ENCODE measurements at regions of chr10 and their contacts with region 1.

Region 1: GRCh38 chr10:96089670-96090462 is 40.2 kb upstream of the ZNF518A start:
- DNase-seq: peak; percentile 90
- H3K27ac ChIP-seq: peak overlapping the region; percentile 95
- CTCF ChIP-seq: no peak

Region 2: DNA sequence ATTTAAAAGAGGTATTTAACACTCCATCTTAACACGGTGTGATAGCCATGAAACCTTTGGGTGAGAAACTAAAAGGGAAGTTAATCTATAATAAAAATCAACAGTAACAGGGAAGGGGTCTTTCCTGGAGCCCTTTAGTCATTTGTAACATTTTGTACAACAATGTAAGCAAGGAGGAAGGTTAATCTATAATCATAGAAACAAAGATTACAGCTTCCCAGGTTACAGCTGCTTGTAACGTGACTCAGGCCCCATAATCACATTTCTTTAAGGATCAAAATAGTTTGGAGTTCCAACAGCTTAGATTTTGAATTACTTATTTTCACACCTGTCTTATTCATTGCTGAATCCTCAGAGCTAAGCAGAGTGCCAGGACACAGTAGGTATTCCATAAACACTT is 200.0 kb before region 1 on chr10:
- CTCF ChIA-PET with region 1: no interaction called
- POLR2A ChIA-PET with region 1: no interaction called
- DNase-seq: no peak
- H3K27ac ChIP-seq: no peak overlapping the region
- CTCF ChIP-seq: no peak

Region 3: DNA sequence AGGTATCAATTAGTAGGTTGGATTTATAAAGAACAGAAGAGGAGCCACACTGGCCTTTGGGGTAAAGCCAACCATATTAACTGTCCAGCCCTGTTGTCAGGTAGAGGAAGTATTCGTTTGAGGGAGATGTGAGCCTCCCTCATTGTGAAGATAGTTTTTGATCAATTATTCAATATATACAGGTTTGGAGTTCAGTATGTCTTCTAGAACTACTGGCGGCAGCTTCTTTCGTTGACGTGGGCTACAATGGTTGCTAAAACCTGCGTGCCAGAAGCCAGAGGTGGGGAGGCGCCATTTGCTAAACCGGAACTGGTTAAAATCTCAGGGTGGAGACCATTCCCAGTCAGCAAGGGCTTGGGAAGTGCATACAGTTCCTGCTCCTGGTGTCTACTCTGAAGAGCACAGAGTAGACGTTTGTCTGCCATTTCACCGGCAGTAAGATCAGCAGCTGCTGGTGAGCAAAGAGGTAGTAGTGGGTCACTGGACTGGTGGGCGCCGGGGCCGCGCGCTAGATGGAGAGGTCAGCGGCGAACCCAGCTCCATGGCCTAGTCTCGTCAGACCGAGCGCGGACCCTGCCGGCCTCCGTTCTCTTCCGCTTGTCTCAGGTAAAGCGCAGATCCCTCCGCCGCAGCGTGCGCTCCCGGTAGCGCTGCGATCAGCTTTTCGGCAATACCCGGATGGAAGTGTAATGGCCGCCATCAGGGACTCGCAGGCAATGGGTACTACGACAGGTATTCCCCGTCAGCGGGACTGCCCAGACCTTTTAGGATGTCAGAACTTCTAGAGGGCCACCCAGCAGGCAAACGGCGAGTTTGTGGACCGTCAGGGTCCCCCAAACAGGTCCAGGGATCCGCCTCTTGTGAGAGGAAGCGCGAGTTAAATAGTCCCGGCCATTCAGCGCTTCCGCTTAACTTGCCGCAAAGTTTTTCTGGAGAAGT is 39.8 kb after region 1 on chr10 and contains the start of gene ZNF518A:
- CTCF ChIA-PET with region 1: no interaction called
- POLR2A ChIA-PET with region 1: interaction called, 32 read pairs
- DNase-seq: peak; percentile 91
- H3K27ac ChIP-seq: peak within 1 kb of the TSS; percentile 99
- CTCF ChIP-seq: no peak

Measured in RWPE1 (cell line).